Heart left ventricle (tissue), 16 donors: ENCODE measurements at regions of chr6 and their contacts with region 1.

Region 1: DNA sequence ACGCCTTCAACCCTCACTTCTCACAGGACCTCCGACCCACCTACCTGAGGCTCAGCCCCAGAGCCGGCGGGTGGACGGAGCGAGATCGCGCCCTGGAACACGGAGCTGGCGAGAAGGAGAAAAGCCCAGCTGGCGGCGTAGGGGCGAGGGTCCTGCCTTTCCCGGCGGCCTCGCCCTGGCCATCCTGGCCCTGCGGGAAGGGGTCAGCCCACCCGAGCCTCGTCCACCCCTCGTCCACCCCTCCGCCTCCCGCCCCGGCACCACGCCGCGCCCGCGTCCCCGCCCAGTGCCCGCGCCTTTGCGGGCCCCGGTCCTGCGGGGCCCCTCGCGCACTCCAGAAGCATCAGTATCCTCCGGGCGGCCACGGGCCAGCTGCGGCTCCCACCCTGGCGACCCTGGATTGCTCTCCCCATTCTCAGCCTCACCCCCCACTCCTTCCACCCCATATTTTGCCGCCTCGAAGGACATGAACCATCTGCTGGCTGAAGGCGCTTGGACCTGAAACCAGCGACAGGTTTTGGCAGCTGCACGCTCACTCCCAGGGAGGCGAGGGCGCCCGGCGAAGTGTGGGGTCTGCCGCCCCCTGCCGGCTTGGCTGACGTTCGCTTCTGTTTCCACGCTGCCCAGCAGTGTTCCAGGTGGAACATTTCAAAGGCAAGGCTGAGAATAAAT is 65.1 kb downstream of the PLG start:
- DNase-seq: peak; percentile 39 to 78 (median 58)
- ATAC-seq: peak; percentile 64 to 93 (median 79)
- H3K4me3 ChIP-seq: peak overlapping the region in 11 of 12 donors; percentile 20 to 52 (median 43)
- H3K27ac ChIP-seq: no peak overlapping the region
- H3K4me1 ChIP-seq: peaks cover 0 to 11% (median 0%) of the 10 kb centered on the region in 12 donors
- H3K27me3 ChIP-seq: peaks cover 0 to 33% (median 14%) of the 10 kb centered on the region in 9 donors
- CTCF ChIP-seq: peak; percentile 46 to 77 (median 61)
- POLR2A ChIP-seq: no peak

Region 2: GRCh38 chr6:160520043-160520904 is 246.9 kb before region 1 on chr6:
- intact Hi-C with region 1: loop called in 1 of 10 experiments (anchors 5 kb)
- DNase-seq: peak; percentile 48 to 87 (median 76)
- ATAC-seq: peak; percentile 86 to 96 (median 94)
- H3K4me3 ChIP-seq: peak overlapping the region; percentile 58 to 78 (median 71)
- H3K27ac ChIP-seq: peak overlapping the region in 11 of 12 donors; percentile 26 to 80 (median 44)
- H3K4me1 ChIP-seq: peaks cover 0 to 14% (median 0%) of the 10 kb centered on the region in 12 donors
- H3K27me3 ChIP-seq: peaks cover 0 to 8% (median 0%) of the 10 kb centered on the region in 9 donors
- CTCF ChIP-seq: peak in 5 of 12 donors; percentile 11 to 94 (median 93)
- POLR2A ChIP-seq: no peak